ENCODE measurements at regions of chrX and their contacts with region 1.

Region 1: DNA sequence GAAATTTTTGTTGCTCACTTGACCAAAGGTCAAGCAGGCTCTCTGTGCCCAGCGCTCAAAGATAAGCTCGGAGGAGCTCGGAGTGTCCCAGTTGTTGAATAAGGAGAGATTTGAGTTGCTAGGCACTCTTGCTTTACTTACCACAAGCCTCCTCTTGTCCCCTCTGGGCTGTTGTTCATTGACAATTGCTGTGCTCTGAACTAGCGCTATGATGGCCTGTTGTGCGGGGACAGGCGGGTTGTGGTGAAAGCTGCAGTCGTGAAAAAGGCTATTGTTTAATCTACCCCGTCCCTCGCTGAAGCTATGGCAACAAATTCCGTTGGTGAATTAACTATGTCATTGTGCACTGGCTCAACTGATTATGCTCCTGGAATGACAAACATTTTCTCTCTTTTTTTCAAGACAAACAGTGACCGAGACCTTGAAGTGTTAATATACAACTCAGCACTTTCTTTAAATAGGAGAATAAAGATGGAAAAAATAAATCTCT is 21.0 kb upstream of the POLA1 start:
- DNase-seq: peak; percentile 78
- ATAC-seq: peak; percentile 92
- H3K4me3 ChIP-seq: peak overlapping the region; percentile 46 to 57 (median 50)
- H3K27ac ChIP-seq: peak overlapping the region; percentile 79
- H3K4me1 ChIP-seq: peaks cover 51% of the 10 kb centered on the region
- H3K27me3 ChIP-seq: no peaks in the 10 kb centered on the region
- CTCF ChIP-seq: no peak
- EP300 ChIP-seq: no peak
- POLR2A ChIP-seq: peak in 1 of 2 experiments; percentile 55; a peak in 2 of 4 replicates
- RAD21 ChIP-seq: no peak

Region 2: GRCh38 chrX:24693453-24694202 is 20.9 kb after region 1 on chrX and contains the start of gene POLA1:
- CTCF ChIA-PET with region 1: no interaction called
- POLR2A ChIA-PET with region 1: interaction called, 6 read pairs
- in situ Hi-C with region 1: no loop called
- intact Hi-C with region 1: loop called (anchors 2 kb)
- DNase-seq: peak; percentile 92
- ATAC-seq: peak; percentile 97
- H3K4me3 ChIP-seq: peak within 1 kb of the TSS; percentile 73 to 82 (median 79)
- H3K27ac ChIP-seq: peak within 1 kb of the TSS; percentile 77
- H3K4me1 ChIP-seq: peaks cover 35% of the 10 kb centered on the region
- H3K27me3 ChIP-seq: no peaks in the 10 kb centered on the region
- CTCF ChIP-seq: peak; percentile 55
- EP300 ChIP-seq: no peak
- POLR2A ChIP-seq: peak; percentile 57 to 60
- RAD21 ChIP-seq: 0 out of 2 replicates have a peak, but pooled peaks have one; percentile 10
- total RNA-seq, gene POLA1: 26.5 and 38.2 TPM in 2 replicates

Measured in HepG2 (cell line).